CD8-positive, alpha-beta T cell (primary cell): ENCODE measurements at regions of chr2 and their contacts with region 1.

Region 1: GRCh38 chr2:42249887-42250286 is 80.7 kb downstream of the EML4 start:
- DNase-seq: peak in 1 of 9 experiments; percentile 20
- ATAC-seq: no peak
- H3K4me3 ChIP-seq: no peak overlapping the region
- H3K4me3 Mint-ChIP-seq: no peak overlapping the region
- H3K27ac ChIP-seq: peak overlapping the region in 1 of 2 experiments; percentile 40
- H3K27ac Mint-ChIP-seq: no peak overlapping the region
- H3K4me1 ChIP-seq: peaks cover 31% of the 10 kb centered on the region
- H3K4me1 Mint-ChIP-seq: peaks cover 76% of the 10 kb centered on the region
- H3K27me3 ChIP-seq: no peaks in the 10 kb centered on the region
- H3K27me3 Mint-ChIP-seq: no peaks in the 10 kb centered on the region
- CTCF ChIP-seq: no peak

Region 2: GRCh38 chr2:42010810-42011209 is 239.1 kb before region 1 on chr2:
- CTCF ChIA-PET with region 1: no interaction called
- POLR2A ChIA-PET with region 1: no interaction called
- intact Hi-C with region 1: no loop called
- DNase-seq: no peak
- ATAC-seq: no peak
- H3K4me3 ChIP-seq: no peak overlapping the region
- H3K4me3 Mint-ChIP-seq: no peak overlapping the region
- H3K27ac ChIP-seq: no peak overlapping the region
- H3K27ac Mint-ChIP-seq: no peak overlapping the region
- H3K4me1 ChIP-seq: no peaks in the 10 kb centered on the region
- H3K4me1 Mint-ChIP-seq: peaks cover 10% of the 10 kb centered on the region
- H3K27me3 ChIP-seq: no peaks in the 10 kb centered on the region
- H3K27me3 Mint-ChIP-seq: peaks cover 2% of the 10 kb centered on the region
- CTCF ChIP-seq: no peak

Region 3: GRCh38 chr2:42216712-42217111 is 33.2 kb before region 1 on chr2:
- CTCF ChIA-PET with region 1: interaction called, 4 read pairs
- POLR2A ChIA-PET with region 1: no interaction called
- intact Hi-C with region 1: loop called in 1 of 2 experiments (anchors 5 kb)
- DNase-seq: no peak
- ATAC-seq: no peak
- H3K4me3 ChIP-seq: no peak overlapping the region
- H3K4me3 Mint-ChIP-seq: no peak overlapping the region
- H3K27ac ChIP-seq: no peak overlapping the region
- H3K27ac Mint-ChIP-seq: no peak overlapping the region
- H3K4me1 ChIP-seq: peaks cover 19% of the 10 kb centered on the region
- H3K4me1 Mint-ChIP-seq: peaks cover 71% of the 10 kb centered on the region
- H3K27me3 ChIP-seq: no peaks in the 10 kb centered on the region
- H3K27me3 Mint-ChIP-seq: no peaks in the 10 kb centered on the region
- CTCF ChIP-seq: no peak

Region 4: GRCh38 chr2:42390401-42390969 is 140.6 kb after region 1 on chr2:
- CTCF ChIA-PET with region 1: no interaction called
- POLR2A ChIA-PET with region 1: no interaction called
- intact Hi-C with region 1: no loop called
- DNase-seq: no peak
- ATAC-seq: no peak
- H3K4me3 ChIP-seq: no peak overlapping the region
- H3K4me3 Mint-ChIP-seq: no peak overlapping the region
- H3K27ac ChIP-seq: no peak overlapping the region
- H3K27ac Mint-ChIP-seq: no peak overlapping the region
- H3K4me1 ChIP-seq: no peaks in the 10 kb centered on the region
- H3K4me1 Mint-ChIP-seq: no peaks in the 10 kb centered on the region
- H3K27me3 ChIP-seq: no peaks in the 10 kb centered on the region
- H3K27me3 Mint-ChIP-seq: no peaks in the 10 kb centered on the region
- CTCF ChIP-seq: no peak

Region 5: GRCh38 chr2:43123981-43124686 is 874.2 kb after region 1 on chr2:
- CTCF ChIA-PET with region 1: no interaction called
- POLR2A ChIA-PET with region 1: no interaction called
- intact Hi-C with region 1: no loop called
- DNase-seq: peak in 2 of 9 experiments; percentile 38 to 40
- ATAC-seq: peak; percentile 24
- H3K4me3 ChIP-seq: no peak overlapping the region
- H3K4me3 Mint-ChIP-seq: peak overlapping the region; percentile 68
- H3K27ac ChIP-seq: no peak overlapping the region
- H3K27ac Mint-ChIP-seq: peak overlapping the region; percentile 82
- H3K4me1 ChIP-seq: peaks cover 60% of the 10 kb centered on the region
- H3K4me1 Mint-ChIP-seq: peaks cover 65% of the 10 kb centered on the region
- H3K27me3 ChIP-seq: no peaks in the 10 kb centered on the region
- H3K27me3 Mint-ChIP-seq: no peaks in the 10 kb centered on the region
- CTCF ChIP-seq: no peak